WTC11 (cell line): ENCODE measurements at regions of chr20 and their contacts with region 1.

Region 1: DNA sequence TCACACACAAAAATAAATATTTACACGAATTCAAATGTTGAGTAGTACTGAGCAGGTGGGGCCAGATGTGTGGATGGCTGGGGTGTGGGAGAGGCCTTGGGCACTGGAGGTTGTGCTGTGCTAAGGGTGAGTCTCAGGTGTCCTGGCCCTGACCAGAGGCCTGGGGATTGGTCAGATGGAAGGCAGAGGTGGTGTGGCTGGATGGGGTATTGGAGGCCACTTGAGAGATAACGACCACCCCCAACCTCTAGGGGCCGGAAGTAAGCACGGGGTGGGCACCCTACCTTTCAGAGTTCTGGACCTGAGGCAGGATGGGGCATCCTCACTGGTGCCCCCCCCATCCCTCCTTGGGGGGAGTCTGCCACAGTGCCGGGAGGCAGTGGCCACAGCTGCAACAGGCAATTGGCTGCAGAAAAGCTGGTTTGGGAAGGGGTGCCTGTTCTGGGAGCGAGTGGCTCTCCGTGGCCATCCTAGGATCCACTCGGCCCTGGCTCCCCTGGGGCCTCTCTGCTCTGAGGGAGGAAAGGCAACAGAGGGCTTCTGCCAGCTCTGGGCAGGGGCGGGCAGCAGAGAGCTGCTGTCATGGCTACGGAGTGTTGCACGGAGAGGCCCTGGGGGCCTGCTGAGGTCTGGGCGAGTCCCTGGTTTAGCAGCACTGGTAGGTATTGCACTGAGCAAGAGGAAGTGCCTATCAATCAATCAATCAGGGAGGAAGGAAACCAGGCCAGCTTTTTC is 87.6 kb downstream of the ASXL1 start:
- DNase-seq: peak; percentile 13
- ATAC-seq: peak; percentile 49
- H3K4me3 Mint-ChIP-seq: no peak overlapping the region
- H3K27ac Mint-ChIP-seq: peak overlapping the region; percentile 84
- H3K4me1 Mint-ChIP-seq: peaks cover 17% of the 10 kb centered on the region
- H3K27me3 Mint-ChIP-seq: no peaks in the 10 kb centered on the region
- CTCF ChIP-seq: no peak

Region 2: DNA sequence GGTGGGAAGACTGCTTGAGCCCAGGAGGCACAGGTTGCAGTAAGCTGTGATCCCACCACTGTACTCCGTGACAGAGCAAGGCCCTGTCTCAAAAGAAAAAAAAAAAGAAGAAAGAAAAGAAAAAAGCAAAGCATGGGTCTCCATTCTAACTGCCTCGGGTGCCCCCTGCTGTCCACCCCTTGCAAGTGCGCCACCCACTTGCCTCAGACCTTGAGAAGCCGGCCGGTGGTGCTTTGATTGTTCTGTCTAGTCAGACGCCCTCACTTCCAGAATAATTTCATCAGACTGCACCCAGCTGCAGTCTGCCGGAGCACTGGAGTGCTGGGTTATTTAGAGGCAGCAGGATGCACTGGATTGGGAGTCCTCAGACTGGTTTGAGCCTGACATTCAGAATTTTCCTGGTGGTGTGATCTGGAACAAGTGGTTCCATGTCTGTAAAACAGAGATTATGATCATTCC is 353.8 kb before region 1 on chr20:
- CTCF ChIA-PET with region 1: no interaction called
- POLR2A ChIA-PET with region 1: no interaction called
- DNase-seq: peak; percentile 91
- ATAC-seq: peak; percentile 62
- H3K4me3 Mint-ChIP-seq: no peak overlapping the region
- H3K27ac Mint-ChIP-seq: no peak overlapping the region
- H3K4me1 Mint-ChIP-seq: peaks cover 33% of the 10 kb centered on the region
- H3K27me3 Mint-ChIP-seq: peaks cover 6% of the 10 kb centered on the region; the same call in 1 of the 2 replicates
- CTCF ChIP-seq: peak; percentile 82

Region 3: DNA sequence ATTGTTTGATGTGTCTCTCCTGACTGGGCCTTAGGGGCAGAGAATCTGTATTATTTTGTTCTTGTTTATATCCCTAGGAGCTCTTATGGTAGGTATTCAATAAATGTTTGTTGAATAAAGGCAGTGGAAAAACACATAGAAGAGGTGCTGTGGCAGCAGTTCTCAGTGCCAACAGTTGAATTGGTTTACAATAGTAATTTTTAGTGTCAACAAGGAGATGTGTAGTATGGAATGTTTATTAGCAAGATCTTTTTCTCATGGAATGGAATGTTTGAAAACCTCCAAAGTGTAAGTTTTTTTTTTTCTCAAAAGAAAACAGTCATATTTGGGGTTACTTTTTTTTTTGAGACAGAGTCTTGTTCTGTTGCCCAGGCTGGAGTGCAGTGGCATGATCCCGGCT is 59.6 kb before region 1 on chr20:
- CTCF ChIA-PET with region 1: no interaction called
- POLR2A ChIA-PET with region 1: no interaction called
- DNase-seq: no peak
- ATAC-seq: no peak
- H3K4me3 Mint-ChIP-seq: no peak overlapping the region
- H3K27ac Mint-ChIP-seq: no peak overlapping the region
- H3K4me1 Mint-ChIP-seq: no peaks in the 10 kb centered on the region
- H3K27me3 Mint-ChIP-seq: no peaks in the 10 kb centered on the region
- CTCF ChIP-seq: no peak

Region 4: DNA sequence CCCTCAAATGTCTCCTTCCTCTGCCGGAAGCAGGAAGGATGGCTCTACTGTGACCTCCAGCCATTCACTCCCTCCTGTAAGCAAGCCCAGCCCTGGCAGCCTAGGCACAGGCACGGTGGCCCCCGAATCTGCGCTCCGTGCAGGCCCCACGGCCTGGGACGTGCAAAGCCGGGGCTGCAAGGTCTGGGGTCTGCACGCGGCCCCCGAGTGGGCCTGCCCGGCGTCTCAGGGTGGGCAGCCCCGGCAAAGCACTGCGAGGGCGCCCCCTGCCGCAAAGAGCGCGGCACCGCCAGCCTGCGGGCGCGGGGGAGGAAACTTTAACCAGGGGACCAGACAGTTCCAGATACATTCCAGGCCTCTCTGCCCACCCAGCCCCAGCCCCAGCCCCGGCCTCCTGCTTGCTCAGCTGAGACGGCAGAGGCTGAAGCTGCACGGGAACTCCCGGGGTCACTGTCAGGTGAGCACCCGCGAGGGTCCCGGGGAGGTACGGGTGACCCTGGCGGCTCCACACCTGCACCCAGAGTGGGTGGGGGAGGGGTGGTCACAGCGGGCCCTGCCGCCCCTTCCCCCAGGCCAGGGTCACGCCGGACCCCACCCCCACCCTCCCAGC is 11.3 kb after region 1 on chr20:
- CTCF ChIA-PET with region 1: interaction called, 19 read pairs
- POLR2A ChIA-PET with region 1: no interaction called
- DNase-seq: peak; percentile 86
- ATAC-seq: peak; percentile 65
- H3K4me3 Mint-ChIP-seq: peak overlapping the region; percentile 59
- H3K27ac Mint-ChIP-seq: no peak overlapping the region
- H3K4me1 Mint-ChIP-seq: peaks cover 13% of the 10 kb centered on the region
- H3K27me3 Mint-ChIP-seq: no peaks in the 10 kb centered on the region
- CTCF ChIP-seq: peak; percentile 89